Activated CD8-positive, alpha-beta T cell treated with anti-CD3 and anti-CD28 coated beads for 36 hours (primary cell): ENCODE measurements at regions of chr7 and their contacts with region 1.

Region 1: DNA sequence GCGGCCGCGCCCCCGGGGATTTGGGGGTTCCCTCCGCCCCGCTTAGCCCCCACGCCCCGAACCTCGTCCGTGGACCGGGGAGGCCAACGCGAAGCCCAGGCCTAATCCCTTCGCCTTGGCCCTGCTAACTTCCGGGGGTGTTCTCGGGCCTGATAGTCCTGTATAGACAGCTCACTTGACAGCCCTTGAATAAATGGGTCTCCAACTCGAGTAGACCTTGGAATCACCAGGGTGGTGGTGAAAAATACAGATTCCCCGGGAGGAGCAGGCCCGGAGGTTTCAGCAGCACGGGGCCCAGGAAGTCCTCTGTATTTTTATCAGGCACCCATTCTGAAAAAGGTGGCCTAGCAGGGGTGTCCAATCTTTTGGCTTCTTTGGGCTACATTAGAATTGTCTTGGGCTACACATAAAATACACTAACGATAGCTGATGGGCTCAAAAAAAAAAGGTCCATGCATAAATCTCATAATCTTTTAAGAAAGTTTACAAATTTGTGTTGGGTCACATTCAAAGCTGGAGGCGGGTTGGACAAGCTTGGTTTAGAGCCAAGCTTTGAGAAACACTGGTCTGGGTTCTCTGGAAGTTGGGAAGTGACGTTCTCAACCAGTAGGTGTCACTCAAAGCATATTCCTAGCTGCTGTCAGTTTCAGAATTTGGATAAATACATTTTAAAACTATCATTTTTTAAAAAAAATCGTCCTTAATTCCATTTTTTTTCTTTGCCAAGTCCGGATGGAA is 221.7 kb downstream of the PHTF2 start:
- DNase-seq: peak; percentile 37
- ATAC-seq: peak; percentile 50
- H3K4me3 Mint-ChIP-seq: peak overlapping the region; percentile 63
- H3K27ac Mint-ChIP-seq: no peak overlapping the region
- H3K4me1 Mint-ChIP-seq: peaks cover 5% of the 10 kb centered on the region
- H3K27me3 Mint-ChIP-seq: peaks cover 27% of the 10 kb centered on the region
- CTCF ChIP-seq: peak; percentile 74

Region 2: GRCh38 chr7:78052112-78052511 is 31.8 kb after region 1 on chr7:
- CTCF ChIA-PET with region 1: interaction called, 10 read pairs
- POLR2A ChIA-PET with region 1: no interaction called
- intact Hi-C with region 1: no loop called
- DNase-seq: no peak
- ATAC-seq: no peak
- H3K4me3 Mint-ChIP-seq: no peak overlapping the region
- H3K27ac Mint-ChIP-seq: no peak overlapping the region
- H3K4me1 Mint-ChIP-seq: no peaks in the 10 kb centered on the region
- H3K27me3 Mint-ChIP-seq: peaks cover 7% of the 10 kb centered on the region
- CTCF ChIP-seq: no peak

Region 3: GRCh38 chr7:78062214-78062613 is 41.9 kb after region 1 on chr7:
- CTCF ChIA-PET with region 1: no interaction called
- POLR2A ChIA-PET with region 1: no interaction called
- intact Hi-C with region 1: no loop called
- DNase-seq: no peak
- ATAC-seq: no peak
- H3K4me3 Mint-ChIP-seq: no peak overlapping the region
- H3K27ac Mint-ChIP-seq: no peak overlapping the region
- H3K4me1 Mint-ChIP-seq: no peaks in the 10 kb centered on the region
- H3K27me3 Mint-ChIP-seq: peaks cover 16% of the 10 kb centered on the region
- CTCF ChIP-seq: no peak

Region 4: DNA sequence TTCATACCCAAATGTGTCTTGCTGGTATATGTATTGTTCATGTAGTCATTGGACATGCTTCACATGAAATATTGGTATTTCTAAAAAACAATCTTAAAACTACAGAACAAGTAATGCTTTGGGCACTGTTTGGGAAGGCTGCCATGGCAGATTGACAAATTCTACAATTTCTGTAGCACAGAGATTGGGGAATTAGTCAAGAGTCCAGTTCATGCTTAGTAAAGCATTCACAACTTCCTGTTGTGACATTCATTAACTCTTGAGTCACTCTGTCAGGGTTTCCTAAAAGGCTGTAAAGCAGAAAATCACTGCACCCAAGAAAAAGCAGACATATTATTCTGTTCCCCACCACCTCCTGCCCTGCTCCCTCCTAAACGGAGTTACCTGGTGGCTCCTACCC is 177.1 kb after region 1 on chr7:
- CTCF ChIA-PET with region 1: no interaction called
- POLR2A ChIA-PET with region 1: no interaction called
- intact Hi-C with region 1: no loop called
- DNase-seq: no peak
- ATAC-seq: no peak
- H3K4me3 Mint-ChIP-seq: no peak overlapping the region
- H3K27ac Mint-ChIP-seq: no peak overlapping the region
- H3K4me1 Mint-ChIP-seq: no peaks in the 10 kb centered on the region
- H3K27me3 Mint-ChIP-seq: no peaks in the 10 kb centered on the region
- CTCF ChIP-seq: no peak